Natural killer cell (primary cell): ENCODE measurements at regions of chr5 and their contacts with region 1.

Region 1: GRCh38 chr5:134370871-134371833 is at the start of gene UBE2B:
- DNase-seq: peak; percentile 95 to 99
- ATAC-seq: peak; percentile 78 to 91 (median 79)
- H3K4me3 ChIP-seq: peak within 1 kb of the TSS; percentile 100
- H3K4me3 Mint-ChIP-seq: peak within 1 kb of the TSS; percentile 94
- H3K27ac ChIP-seq: peak within 1 kb of the TSS; percentile 100
- H3K27ac Mint-ChIP-seq: peak within 1 kb of the TSS; percentile 98 to 99
- H3K4me1 ChIP-seq: peaks cover 26% of the 10 kb centered on the region
- H3K4me1 Mint-ChIP-seq: peaks cover 54 to 62% of the 10 kb centered on the region in 2 donors
- H3K27me3 ChIP-seq: no peaks in the 10 kb centered on the region
- H3K27me3 Mint-ChIP-seq: no peaks in the 10 kb centered on the region
- CTCF ChIP-seq: no peak
- total RNA-seq, gene UBE2B: 93.5 to 124 (median 116) TPM

Region 2: DNA sequence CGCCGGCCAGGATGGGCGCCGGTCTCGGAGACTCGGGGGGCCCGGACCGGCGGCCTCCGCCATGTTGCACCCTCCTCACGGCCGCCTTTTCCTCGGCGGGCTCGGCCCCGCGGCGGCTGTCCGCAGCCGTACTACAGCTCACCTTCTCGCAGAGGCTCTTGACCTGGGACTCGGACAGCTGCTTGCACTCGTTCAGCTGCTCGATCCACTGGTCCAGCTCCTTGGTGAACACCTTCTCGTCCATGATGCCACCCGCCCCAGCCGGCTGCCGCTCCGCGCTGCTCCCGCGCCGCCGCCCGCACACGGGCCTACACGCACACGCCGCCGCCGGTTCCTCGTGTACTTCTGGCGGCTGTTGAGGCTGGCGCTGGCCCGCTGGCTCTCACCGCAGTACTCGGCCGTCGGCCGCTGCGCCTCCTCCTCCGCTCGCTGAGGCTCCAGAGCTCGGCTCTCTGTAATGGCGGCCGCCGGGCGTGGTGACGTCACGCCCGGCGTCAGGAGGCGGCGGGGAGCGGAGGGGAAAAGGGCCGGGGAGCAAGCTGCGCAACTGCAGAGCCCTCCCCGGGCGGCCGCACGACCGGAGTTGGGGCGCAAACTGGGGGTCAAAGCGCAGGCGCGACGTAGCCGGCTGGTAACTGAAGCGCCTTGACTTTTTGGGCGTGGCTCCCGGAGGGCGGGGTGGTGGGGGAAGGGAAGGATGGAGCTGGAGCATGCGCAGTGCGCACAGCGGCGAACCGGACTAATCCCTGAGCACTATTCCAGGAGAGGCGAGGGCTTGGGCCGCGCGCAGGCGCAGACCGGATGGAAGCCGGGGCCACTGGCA is 145.3 kb before region 1 on chr5 and contains the start of gene PPP2CA:
- intact Hi-C with region 1: loop called (anchors 1 kb)
- DNase-seq: peak; percentile 98 to 100
- ATAC-seq: peak; percentile 80 to 92 (median 81)
- H3K4me3 ChIP-seq: peak within 1 kb of the TSS; percentile 79
- H3K4me3 Mint-ChIP-seq: peak within 1 kb of the TSS; percentile 97
- H3K27ac ChIP-seq: peak within 1 kb of the TSS; percentile 96
- H3K27ac Mint-ChIP-seq: peak within 1 kb of the TSS; percentile 96 to 100
- H3K4me1 ChIP-seq: peaks cover 20% of the 10 kb centered on the region
- H3K4me1 Mint-ChIP-seq: peaks cover 55 to 61% of the 10 kb centered on the region in 2 donors
- H3K27me3 ChIP-seq: no peaks in the 10 kb centered on the region
- H3K27me3 Mint-ChIP-seq: no peaks in the 10 kb centered on the region
- CTCF ChIP-seq: peak; percentile 23
- total RNA-seq, gene PPP2CA: 188 to 205 (median 191) TPM

Region 3: GRCh38 chr5:134527146-134527960 is 156.2 kb after region 1 on chr5:
- intact Hi-C with region 1: loop called (anchors 2 kb)
- DNase-seq: peak; percentile 72 to 84
- ATAC-seq: peak; percentile 40 to 49 (median 40)
- H3K4me3 ChIP-seq: peak overlapping the region; percentile 75
- H3K4me3 Mint-ChIP-seq: peak overlapping the region; percentile 96
- H3K27ac ChIP-seq: peak overlapping the region; percentile 56
- H3K27ac Mint-ChIP-seq: peak overlapping the region; percentile 92 to 96
- H3K4me1 ChIP-seq: peaks cover 60% of the 10 kb centered on the region
- H3K4me1 Mint-ChIP-seq: peaks cover 40 to 70% of the 10 kb centered on the region in 2 donors
- H3K27me3 ChIP-seq: no peaks in the 10 kb centered on the region
- H3K27me3 Mint-ChIP-seq: no peaks in the 10 kb centered on the region
- CTCF ChIP-seq: peak; percentile 70

Region 4: DNA sequence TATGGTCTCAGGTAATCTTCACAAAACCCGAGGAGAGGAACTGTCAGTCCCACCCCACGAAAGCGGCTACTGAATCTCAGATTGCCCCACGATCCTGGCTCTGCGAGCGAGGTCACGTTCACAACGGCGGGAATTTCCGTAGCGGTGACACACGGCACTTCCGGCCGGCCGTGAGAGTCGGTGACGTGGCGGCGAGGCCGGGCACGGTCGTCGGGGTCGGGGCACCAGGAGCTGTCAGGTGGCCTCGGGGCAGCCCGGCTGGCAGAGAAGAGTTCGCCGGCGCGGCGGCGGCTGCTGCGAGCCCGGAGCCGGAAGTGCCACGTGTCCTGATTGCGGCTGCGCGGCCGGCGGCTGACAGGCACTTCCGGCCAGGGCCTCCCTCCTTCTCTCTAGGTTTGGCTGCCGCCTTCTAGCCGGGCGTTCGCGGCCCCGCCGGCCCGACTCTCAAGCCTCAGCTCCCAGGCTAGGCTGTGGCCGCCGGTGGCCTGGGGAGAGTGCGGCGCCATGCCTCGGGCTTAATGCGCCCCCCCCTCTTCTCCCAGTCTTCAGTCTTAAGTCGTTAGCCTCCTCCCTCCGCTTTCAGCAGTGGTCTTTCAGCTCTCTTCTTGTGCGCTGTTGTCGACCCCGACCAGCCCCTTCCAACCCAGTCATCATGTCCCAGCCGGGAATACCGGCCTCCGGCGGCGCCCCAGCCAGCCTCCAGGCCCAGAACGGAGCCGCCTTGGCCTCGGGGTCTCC is 277.4 kb after region 1 on chr5 and contains the start of gene SEC24A:
- intact Hi-C with region 1: loop called (anchors 5 kb)
- DNase-seq: peak; percentile 91 to 96
- ATAC-seq: peak; percentile 79 to 92 (median 86)
- H3K4me3 ChIP-seq: peak within 1 kb of the TSS; percentile 83
- H3K4me3 Mint-ChIP-seq: peak within 1 kb of the TSS; percentile 98
- H3K27ac ChIP-seq: peak within 1 kb of the TSS; percentile 97
- H3K27ac Mint-ChIP-seq: peak within 1 kb of the TSS; percentile 99
- H3K4me1 ChIP-seq: peaks cover 17% of the 10 kb centered on the region
- H3K4me1 Mint-ChIP-seq: peaks cover 22 to 26% of the 10 kb centered on the region in 2 donors
- H3K27me3 ChIP-seq: no peaks in the 10 kb centered on the region
- H3K27me3 Mint-ChIP-seq: no peaks in the 10 kb centered on the region
- CTCF ChIP-seq: no peak
- total RNA-seq, gene SEC24A: 20.9 to 26.1 (median 25.0) TPM